B cell (primary cell): ENCODE measurements at regions of chr3 and their contacts with region 1.

Region 1: GRCh38 chr3:13091898-13092611 is 18.8 kb upstream of the IQSEC1 start:
- DNase-seq: peak; percentile 92
- ATAC-seq: peak; percentile 43
- H3K4me3 ChIP-seq: no peak overlapping the region
- H3K4me3 Mint-ChIP-seq: no peak overlapping the region
- H3K27ac ChIP-seq: no peak overlapping the region
- H3K27ac Mint-ChIP-seq: peak overlapping the region; percentile 59
- H3K4me1 ChIP-seq: peaks cover 47 to 67% of the 10 kb centered on the region in 2 donors
- H3K4me1 Mint-ChIP-seq: peaks cover 67% of the 10 kb centered on the region
- H3K27me3 ChIP-seq: peaks cover 0 to 14% (median 2%) of the 10 kb centered on the region in 4 experiments
- H3K27me3 Mint-ChIP-seq: peaks cover 16% of the 10 kb centered on the region
- CTCF ChIP-seq: peak; percentile 92

Region 2: GRCh38 chr3:12879191-12879815 is 212.8 kb before region 1 on chr3:
- CTCF ChIA-PET with region 1: no interaction called
- POLR2A ChIA-PET with region 1: no interaction called
- intact Hi-C with region 1: no loop called
- DNase-seq: no peak
- ATAC-seq: no peak
- H3K4me3 ChIP-seq: no peak overlapping the region
- H3K4me3 Mint-ChIP-seq: no peak overlapping the region
- H3K27ac ChIP-seq: no peak overlapping the region
- H3K27ac Mint-ChIP-seq: no peak overlapping the region
- H3K4me1 ChIP-seq: peaks cover 17 to 29% of the 10 kb centered on the region in 2 donors
- H3K4me1 Mint-ChIP-seq: peaks cover 23% of the 10 kb centered on the region
- H3K27me3 ChIP-seq: peaks cover 0 to 21% (median 4%) of the 10 kb centered on the region in 4 experiments
- H3K27me3 Mint-ChIP-seq: peaks cover 7% of the 10 kb centered on the region
- CTCF ChIP-seq: no peak

Region 3: DNA sequence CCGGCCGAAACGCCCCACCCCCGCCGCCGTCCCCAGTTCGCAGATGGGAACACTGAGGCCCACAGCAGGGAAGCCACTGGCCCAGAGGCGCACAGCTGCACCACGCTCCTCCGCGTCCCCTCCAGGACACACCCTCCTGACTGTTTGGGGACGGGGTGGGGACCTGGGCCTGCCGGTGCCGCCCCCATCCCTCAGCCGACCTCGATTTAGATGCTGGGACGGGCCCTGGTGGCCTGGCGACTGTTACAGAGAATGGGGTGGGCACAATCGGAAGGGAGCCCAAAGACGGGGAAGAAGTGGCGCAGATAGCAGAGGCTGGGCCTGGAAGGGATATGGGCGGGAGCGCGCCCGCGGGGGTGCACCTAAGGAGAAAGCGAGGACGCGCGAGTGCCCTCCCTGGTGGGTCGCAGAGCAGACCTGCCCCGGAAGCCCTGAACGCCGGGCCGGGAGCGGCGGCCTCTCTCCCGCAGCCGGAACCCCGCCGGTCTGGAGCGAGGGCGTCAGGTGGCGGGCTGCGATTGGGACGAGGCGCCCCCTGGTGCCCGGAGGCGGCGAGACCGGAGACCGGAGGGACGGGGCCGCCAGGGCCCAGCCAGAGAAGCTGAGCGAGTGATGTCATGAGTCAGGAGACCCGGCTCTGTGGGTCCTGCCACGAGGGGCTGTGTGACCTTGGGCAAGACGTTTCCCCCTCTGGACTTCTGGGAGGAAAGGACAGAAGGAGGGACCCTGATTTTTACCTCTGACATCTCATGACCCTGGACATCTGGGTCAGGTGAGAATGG is 97.3 kb before region 1 on chr3:
- CTCF ChIA-PET with region 1: interaction called, 11 read pairs
- POLR2A ChIA-PET with region 1: no interaction called
- intact Hi-C with region 1: loop called (anchors 5 kb)
- DNase-seq: peak; percentile 90
- ATAC-seq: peak; percentile 75
- H3K4me3 ChIP-seq: peak overlapping the region; percentile 30 to 91 (median 72)
- H3K4me3 Mint-ChIP-seq: peak overlapping the region; percentile 95
- H3K27ac ChIP-seq: peak overlapping the region; percentile 74 to 88
- H3K27ac Mint-ChIP-seq: peak overlapping the region; percentile 92
- H3K4me1 ChIP-seq: peaks cover 58 to 83% of the 10 kb centered on the region in 2 donors
- H3K4me1 Mint-ChIP-seq: peaks cover 81% of the 10 kb centered on the region
- H3K27me3 ChIP-seq: no peaks in the 10 kb centered on the region
- H3K27me3 Mint-ChIP-seq: no peaks in the 10 kb centered on the region
- CTCF ChIP-seq: peak; percentile 91

Region 4: GRCh38 chr3:13073326-13074005 is 18.6 kb before region 1 on chr3 and contains the start of gene IQSEC1:
- CTCF ChIA-PET with region 1: interaction called, 8 read pairs
- POLR2A ChIA-PET with region 1: interaction called, 7 read pairs
- intact Hi-C with region 1: loop called (anchors 1 kb)
- DNase-seq: peak; percentile 94
- ATAC-seq: peak; percentile 71
- H3K4me3 ChIP-seq: peak within 1 kb of the TSS; percentile 21 to 65 (median 53)
- H3K4me3 Mint-ChIP-seq: peak within 1 kb of the TSS; percentile 91
- H3K27ac ChIP-seq: peak within 1 kb of the TSS; percentile 79 to 90
- H3K27ac Mint-ChIP-seq: peak within 1 kb of the TSS; percentile 93
- H3K4me1 ChIP-seq: peaks cover 62 to 67% of the 10 kb centered on the region in 2 donors
- H3K4me1 Mint-ChIP-seq: peaks cover 68% of the 10 kb centered on the region
- H3K27me3 ChIP-seq: no peaks in the 10 kb centered on the region
- H3K27me3 Mint-ChIP-seq: no peaks in the 10 kb centered on the region
- CTCF ChIP-seq: no peak
- total RNA-seq, gene IQSEC1: 222 and 235 TPM in 2 replicates

Region 5: DNA sequence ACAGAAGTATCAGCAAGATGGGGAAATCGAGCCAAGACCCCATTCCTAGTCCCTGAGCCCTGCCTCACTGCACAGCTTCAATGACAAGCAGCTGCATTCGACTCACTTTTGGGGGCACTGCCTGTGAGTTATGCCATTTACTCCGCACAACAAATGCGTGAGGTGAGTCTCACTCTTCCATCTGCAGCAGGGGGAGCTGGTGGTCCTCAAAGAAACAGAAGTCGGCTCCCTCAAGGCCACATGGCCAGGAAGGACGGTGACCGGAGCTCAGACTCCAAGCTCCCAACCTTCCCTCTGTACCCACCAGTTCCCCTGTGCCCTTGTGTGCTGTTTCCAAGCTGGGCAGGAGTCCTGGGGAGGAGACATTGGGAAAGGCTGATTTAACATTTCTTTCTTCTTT is 108.9 kb after region 1 on chr3:
- CTCF ChIA-PET with region 1: interaction called, 11 read pairs
- POLR2A ChIA-PET with region 1: no interaction called
- intact Hi-C with region 1: loop called (anchors 5 kb)
- DNase-seq: no peak
- ATAC-seq: no peak
- H3K4me3 ChIP-seq: no peak overlapping the region
- H3K4me3 Mint-ChIP-seq: no peak overlapping the region
- H3K27ac ChIP-seq: no peak overlapping the region
- H3K27ac Mint-ChIP-seq: no peak overlapping the region
- H3K4me1 ChIP-seq: peaks cover 15 to 16% of the 10 kb centered on the region in 2 donors
- H3K4me1 Mint-ChIP-seq: peaks cover 16% of the 10 kb centered on the region
- H3K27me3 ChIP-seq: peaks cover 0 to 40% (median 10%) of the 10 kb centered on the region in 4 experiments
- H3K27me3 Mint-ChIP-seq: peaks cover 39% of the 10 kb centered on the region
- CTCF ChIP-seq: no peak

Region 6: DNA sequence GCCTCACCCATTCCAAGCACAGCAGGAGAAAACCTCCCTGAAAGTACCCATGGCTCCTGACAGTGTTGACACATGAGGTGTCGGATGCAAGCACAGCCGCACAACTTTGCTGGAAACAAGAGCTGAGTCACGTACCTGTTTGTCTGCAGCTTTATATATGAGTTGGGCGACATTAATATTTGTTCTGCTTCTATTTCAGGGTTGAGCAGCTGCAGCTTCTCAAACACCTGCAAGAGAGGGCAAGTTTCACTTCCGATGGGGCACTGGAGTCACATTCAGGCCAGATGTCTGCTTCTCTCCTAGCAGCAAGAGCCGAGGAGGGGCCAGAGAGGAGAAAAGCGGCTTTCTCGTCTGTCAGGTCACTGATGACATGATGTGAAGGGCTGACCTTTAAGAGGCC is 240.1 kb after region 1 on chr3:
- CTCF ChIA-PET with region 1: interaction called, 34 read pairs
- POLR2A ChIA-PET with region 1: interaction called, 8 read pairs
- intact Hi-C with region 1: loop called (anchors 1 kb)
- DNase-seq: peak; percentile 87
- ATAC-seq: peak; percentile 89
- H3K4me3 ChIP-seq: no peak overlapping the region
- H3K4me3 Mint-ChIP-seq: peak overlapping the region; percentile 62
- H3K27ac ChIP-seq: peak overlapping the region; percentile 46 to 64
- H3K27ac Mint-ChIP-seq: peak overlapping the region; percentile 87
- H3K4me1 ChIP-seq: peaks cover 27 to 41% of the 10 kb centered on the region in 2 donors
- H3K4me1 Mint-ChIP-seq: peaks cover 40% of the 10 kb centered on the region
- H3K27me3 ChIP-seq: no peaks in the 10 kb centered on the region
- H3K27me3 Mint-ChIP-seq: no peaks in the 10 kb centered on the region
- CTCF ChIP-seq: no peak

Region 7: GRCh38 chr3:13414040-13414729 is 322.1 kb after region 1 on chr3:
- CTCF ChIA-PET with region 1: interaction called, 4 read pairs
- POLR2A ChIA-PET with region 1: interaction called, 13 read pairs
- intact Hi-C with region 1: no loop called
- DNase-seq: peak; percentile 94
- ATAC-seq: peak; percentile 92
- H3K4me3 ChIP-seq: peak overlapping the region in 4 of 5 experiments; percentile 21 to 33 (median 29)
- H3K4me3 Mint-ChIP-seq: peak overlapping the region; percentile 73
- H3K27ac ChIP-seq: peak overlapping the region; percentile 90 to 91
- H3K27ac Mint-ChIP-seq: peak overlapping the region; percentile 98
- H3K4me1 ChIP-seq: peaks cover 60 to 72% of the 10 kb centered on the region in 2 donors
- H3K4me1 Mint-ChIP-seq: peaks cover 61% of the 10 kb centered on the region
- H3K27me3 ChIP-seq: no peaks in the 10 kb centered on the region
- H3K27me3 Mint-ChIP-seq: no peaks in the 10 kb centered on the region
- CTCF ChIP-seq: peak; percentile 26

Region 8: DNA sequence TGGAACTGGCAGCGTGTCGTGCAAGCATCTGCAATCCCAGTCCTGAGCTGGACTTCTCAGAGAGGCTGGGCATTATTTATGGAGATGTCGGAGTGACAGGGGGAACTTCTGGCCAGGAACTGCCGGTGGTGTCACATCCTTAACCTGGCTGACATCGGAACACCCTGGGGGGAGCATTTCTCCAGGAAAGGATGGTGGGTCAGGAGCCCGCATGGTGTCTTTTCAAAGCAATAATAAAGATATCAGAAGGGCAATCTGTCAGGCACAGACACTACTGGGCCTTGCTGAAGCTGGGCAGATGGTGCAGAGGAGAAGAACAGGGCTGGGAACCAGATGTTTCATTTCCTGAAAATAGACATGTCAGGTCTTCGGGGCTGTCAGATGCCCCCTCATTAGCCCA is 654.3 kb after region 1 on chr3:
- CTCF ChIA-PET with region 1: no interaction called
- POLR2A ChIA-PET with region 1: no interaction called
- intact Hi-C with region 1: no loop called
- DNase-seq: no peak
- ATAC-seq: no peak
- H3K4me3 ChIP-seq: no peak overlapping the region
- H3K4me3 Mint-ChIP-seq: no peak overlapping the region
- H3K27ac ChIP-seq: no peak overlapping the region
- H3K27ac Mint-ChIP-seq: no peak overlapping the region
- H3K4me1 ChIP-seq: no peaks in the 10 kb centered on the region
- H3K4me1 Mint-ChIP-seq: no peaks in the 10 kb centered on the region
- H3K27me3 ChIP-seq: peaks cover 0 to 8% (median 0%) of the 10 kb centered on the region in 4 experiments
- H3K27me3 Mint-ChIP-seq: peaks cover 30% of the 10 kb centered on the region
- CTCF ChIP-seq: no peak